ENCODE measurements at regions of chr7 and their contacts with region 1.

Region 1: GRCh38 chr7:139943401-139943800 is 114.3 kb downstream of the TBXAS1 start:
- DNase-seq: no peak
- ATAC-seq: no peak
- H3K4me3 ChIP-seq: no peak overlapping the region
- H3K27ac ChIP-seq: no peak overlapping the region
- H3K4me1 ChIP-seq: no peaks in the 10 kb centered on the region
- H3K27me3 ChIP-seq: no peaks in the 10 kb centered on the region
- CTCF ChIP-seq: no peak

Region 2: DNA sequence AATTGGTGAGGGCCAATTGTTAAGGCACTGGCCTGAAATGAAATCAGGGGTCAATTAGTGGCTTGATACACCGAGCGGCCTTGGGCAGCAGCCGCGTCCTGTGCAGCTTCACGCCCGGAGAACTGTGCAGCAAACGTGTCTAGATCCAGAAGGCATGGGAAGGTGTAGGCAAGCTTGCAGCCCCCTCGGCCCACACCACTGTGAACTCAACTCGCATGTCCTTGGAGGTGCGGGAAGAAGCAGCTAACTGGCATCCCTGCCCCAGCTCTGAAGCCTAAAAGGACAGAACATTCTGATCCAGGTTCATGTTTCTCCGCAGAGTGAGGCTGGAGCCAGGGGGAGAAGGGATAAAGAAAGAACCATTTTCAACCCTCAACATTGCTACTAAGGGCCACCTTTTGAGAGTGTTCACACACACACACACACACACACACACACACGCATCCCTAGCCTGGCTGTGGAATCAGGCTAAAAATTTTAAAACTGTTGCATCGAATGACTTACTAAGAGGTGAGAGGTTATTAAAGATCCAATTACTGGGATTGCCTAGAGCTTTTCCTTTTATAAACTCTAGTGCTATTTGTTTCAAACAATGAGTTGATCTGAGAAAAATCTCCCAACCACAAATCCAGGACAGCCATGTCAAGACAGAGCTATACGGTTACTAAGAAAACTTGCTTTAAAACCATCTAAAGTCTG is 15.3 kb after region 1 on chr7:
- CTCF ChIA-PET with region 1: no interaction called
- POLR2A ChIA-PET with region 1: no interaction called
- in situ Hi-C with region 1: no loop called
- intact Hi-C with region 1: no loop called
- DNase-seq: no peak
- ATAC-seq: no peak
- H3K4me3 ChIP-seq: no peak overlapping the region
- H3K27ac ChIP-seq: no peak overlapping the region
- H3K4me1 ChIP-seq: no peaks in the 10 kb centered on the region
- H3K27me3 ChIP-seq: no peaks in the 10 kb centered on the region
- CTCF ChIP-seq: no peak

Region 3: GRCh38 chr7:139973101-139974050 is 30.0 kb after region 1 on chr7:
- CTCF ChIA-PET with region 1: no interaction called
- POLR2A ChIA-PET with region 1: interaction called, 13 read pairs
- in situ Hi-C with region 1: no loop called
- intact Hi-C with region 1: no loop called
- DNase-seq: no peak
- ATAC-seq: no peak
- H3K4me3 ChIP-seq: no peak overlapping the region
- H3K27ac ChIP-seq: no peak overlapping the region
- H3K4me1 ChIP-seq: no peaks in the 10 kb centered on the region
- H3K27me3 ChIP-seq: no peaks in the 10 kb centered on the region
- CTCF ChIP-seq: no peak

Region 4: DNA sequence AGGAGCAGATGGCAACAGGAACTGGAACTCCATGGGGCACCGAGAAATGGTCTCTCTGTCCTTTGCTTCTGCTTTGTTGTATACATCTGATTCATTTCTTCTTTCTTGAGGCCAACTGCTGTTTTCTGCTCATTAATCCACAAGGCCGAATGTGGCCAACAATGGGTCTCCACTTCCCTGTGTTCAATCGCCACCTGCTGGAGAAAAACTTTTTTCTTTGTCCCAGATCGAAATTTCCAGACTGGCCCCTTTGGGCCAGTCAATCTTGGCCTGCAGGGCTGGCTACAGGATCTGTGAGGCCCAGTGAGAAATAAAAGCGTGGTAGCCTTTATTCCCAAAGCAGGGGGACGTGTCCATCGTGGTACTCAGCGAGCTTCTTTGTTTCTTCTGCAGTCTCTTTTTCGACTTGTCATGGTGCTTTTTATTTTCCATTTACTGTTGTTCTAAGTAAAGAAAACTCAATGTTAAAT is 60.5 kb after region 1 on chr7:
- CTCF ChIA-PET with region 1: no interaction called
- POLR2A ChIA-PET with region 1: no interaction called
- in situ Hi-C with region 1: no loop called
- intact Hi-C with region 1: no loop called
- DNase-seq: peak; percentile 35
- ATAC-seq: peak; percentile 50; the same call in 1 of the 2 replicates
- H3K4me3 ChIP-seq: no peak overlapping the region
- H3K27ac ChIP-seq: no peak overlapping the region
- H3K4me1 ChIP-seq: peaks cover 4% of the 10 kb centered on the region; the same call in 1 of the 2 replicates
- H3K27me3 ChIP-seq: no peaks in the 10 kb centered on the region
- CTCF ChIP-seq: peak; percentile 82

Measured in Panc1 (cell line).